ENCODE measurements at regions of chr3 and their contacts with region 1.

Region 1: GRCh38 chr3:37887062-37887461 is 25.4 kb downstream of the CTDSPL start:
- DNase-seq: no peak
- H3K4me3 Mint-ChIP-seq: no peak overlapping the region
- H3K27ac Mint-ChIP-seq: no peak overlapping the region
- H3K4me1 Mint-ChIP-seq: peaks cover 42% of the 10 kb centered on the region
- H3K27me3 Mint-ChIP-seq: no peaks in the 10 kb centered on the region
- CTCF ChIP-seq: no peak

Region 2: DNA sequence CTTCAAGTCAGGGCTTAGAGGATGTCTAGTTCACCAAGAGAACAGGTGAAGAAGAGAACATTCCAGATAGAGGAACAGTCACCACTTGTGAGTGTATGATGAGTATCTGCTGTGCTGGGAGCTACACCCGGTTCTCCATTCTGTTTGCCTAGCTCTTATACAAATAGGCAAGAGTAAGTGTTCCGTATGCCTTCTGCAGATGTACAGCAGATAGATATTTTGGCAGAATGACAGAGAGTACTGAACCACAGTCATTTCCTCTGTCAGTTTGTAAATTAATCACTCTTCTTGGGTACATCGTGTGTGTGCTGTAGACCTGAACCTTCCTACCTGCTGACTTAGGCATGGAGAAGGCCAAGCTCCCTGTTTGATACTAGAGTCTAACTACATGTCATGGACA is 133.6 kb before region 1 on chr3:
- CTCF ChIA-PET with region 1: no interaction called
- intact Hi-C with region 1: no loop called
- DNase-seq: no peak
- H3K4me3 Mint-ChIP-seq: no peak overlapping the region
- H3K27ac Mint-ChIP-seq: no peak overlapping the region
- H3K4me1 Mint-ChIP-seq: no peaks in the 10 kb centered on the region
- H3K27me3 Mint-ChIP-seq: peaks cover 55% of the 10 kb centered on the region
- CTCF ChIP-seq: no peak

Region 3: DNA sequence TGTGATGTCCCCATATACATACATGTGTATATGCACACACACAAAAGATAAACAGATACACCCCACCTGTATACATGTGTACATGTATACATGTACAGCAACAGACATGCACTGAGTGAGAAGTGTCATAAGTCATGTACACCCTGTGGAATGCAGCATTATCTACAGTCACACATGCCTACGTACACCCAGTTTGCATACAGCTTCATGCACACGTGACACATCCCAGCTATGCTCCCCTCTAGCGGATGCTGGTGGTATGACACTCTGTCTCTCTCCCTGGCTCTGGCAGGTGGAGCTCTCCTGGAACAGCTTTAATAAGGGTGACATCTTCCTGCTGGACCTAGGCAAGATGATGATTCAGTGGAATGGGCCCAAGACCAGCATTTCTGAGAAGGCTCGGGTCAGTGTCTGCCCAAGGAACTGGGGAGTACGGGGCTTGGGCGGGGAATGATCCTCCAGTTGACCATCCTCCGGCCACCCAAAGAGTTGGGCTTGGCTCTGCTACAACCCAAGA is 109.8 kb after region 1 on chr3:
- CTCF ChIA-PET with region 1: no interaction called
- intact Hi-C with region 1: no loop called
- DNase-seq: peak; percentile 86
- H3K4me3 Mint-ChIP-seq: no peak overlapping the region
- H3K27ac Mint-ChIP-seq: peak overlapping the region; percentile 60
- H3K4me1 Mint-ChIP-seq: peaks cover 38% of the 10 kb centered on the region
- H3K27me3 Mint-ChIP-seq: no peaks in the 10 kb centered on the region
- CTCF ChIP-seq: peak; percentile 87

Region 4: GRCh38 chr3:38334142-38335055 is 447.3 kb after region 1 on chr3:
- CTCF ChIA-PET with region 1: interaction called, 10 read pairs
- intact Hi-C with region 1: no loop called
- DNase-seq: no peak
- H3K4me3 Mint-ChIP-seq: no peak overlapping the region
- H3K27ac Mint-ChIP-seq: no peak overlapping the region
- H3K4me1 Mint-ChIP-seq: no peaks in the 10 kb centered on the region
- H3K27me3 Mint-ChIP-seq: peaks cover 16% of the 10 kb centered on the region
- CTCF ChIP-seq: no peak

Measured in Calu3 (cell line).